Mammary epithelial cell (primary cell): ENCODE measurements at regions of chr9 and their contacts with region 1.

Region 1: DNA sequence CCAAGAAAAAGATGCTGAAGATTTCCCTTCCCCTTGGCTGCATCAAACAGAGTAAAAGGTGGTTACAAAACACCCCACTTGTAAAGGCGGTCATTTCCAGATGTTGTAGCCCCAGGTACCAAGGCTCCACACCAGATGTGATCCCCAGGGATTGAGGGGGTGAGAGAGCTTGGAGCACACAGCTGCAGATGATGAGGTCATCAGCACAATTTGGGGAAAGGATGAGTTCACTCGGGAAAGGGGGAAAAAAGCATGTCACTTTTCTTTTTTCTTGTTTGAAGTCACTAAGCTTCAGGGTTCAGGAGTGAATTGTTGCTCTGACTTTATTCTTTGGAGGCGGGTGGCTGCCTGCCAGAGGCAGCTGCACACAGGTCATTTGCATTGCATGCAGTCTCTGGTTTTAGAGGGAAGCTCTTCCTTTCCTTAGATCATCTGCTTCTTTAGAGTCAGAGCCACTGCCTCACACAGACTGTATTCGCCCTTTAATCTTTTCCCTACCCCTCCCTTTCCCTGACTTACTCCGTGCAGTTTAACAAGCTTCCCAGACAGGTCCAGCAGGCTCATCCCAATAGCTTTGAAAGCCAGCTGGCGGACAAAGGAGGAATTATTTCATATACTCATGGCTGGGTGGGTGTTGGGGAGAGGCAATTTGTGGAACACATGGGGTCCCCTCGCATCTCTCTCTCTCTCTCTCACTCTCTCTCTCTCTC is 409.3 kb upstream of the SLC24A2 start:
- DNase-seq: peak; percentile 43
- H3K4me3 ChIP-seq: no peak overlapping the region
- H3K27ac ChIP-seq: no peak overlapping the region
- H3K4me1 ChIP-seq: no peaks in the 10 kb centered on the region
- H3K27me3 ChIP-seq: no peaks in the 10 kb centered on the region
- CTCF ChIP-seq: peak in 1 of 2 donors; percentile 13

Region 2: GRCh38 chr9:20271096-20271495 is 73.0 kb after region 1 on chr9:
- CTCF ChIA-PET with region 1: no interaction called
- dilution Hi-C with region 1: no loop called
- in situ Hi-C with region 1: no loop called
- intact Hi-C with region 1: loop called (anchors 2 kb)
- DNase-seq: no peak
- H3K4me3 ChIP-seq: no peak overlapping the region
- H3K27ac ChIP-seq: no peak overlapping the region
- H3K4me1 ChIP-seq: peaks cover 11% of the 10 kb centered on the region
- H3K27me3 ChIP-seq: no peaks in the 10 kb centered on the region
- CTCF ChIP-seq: no peak

Region 3: DNA sequence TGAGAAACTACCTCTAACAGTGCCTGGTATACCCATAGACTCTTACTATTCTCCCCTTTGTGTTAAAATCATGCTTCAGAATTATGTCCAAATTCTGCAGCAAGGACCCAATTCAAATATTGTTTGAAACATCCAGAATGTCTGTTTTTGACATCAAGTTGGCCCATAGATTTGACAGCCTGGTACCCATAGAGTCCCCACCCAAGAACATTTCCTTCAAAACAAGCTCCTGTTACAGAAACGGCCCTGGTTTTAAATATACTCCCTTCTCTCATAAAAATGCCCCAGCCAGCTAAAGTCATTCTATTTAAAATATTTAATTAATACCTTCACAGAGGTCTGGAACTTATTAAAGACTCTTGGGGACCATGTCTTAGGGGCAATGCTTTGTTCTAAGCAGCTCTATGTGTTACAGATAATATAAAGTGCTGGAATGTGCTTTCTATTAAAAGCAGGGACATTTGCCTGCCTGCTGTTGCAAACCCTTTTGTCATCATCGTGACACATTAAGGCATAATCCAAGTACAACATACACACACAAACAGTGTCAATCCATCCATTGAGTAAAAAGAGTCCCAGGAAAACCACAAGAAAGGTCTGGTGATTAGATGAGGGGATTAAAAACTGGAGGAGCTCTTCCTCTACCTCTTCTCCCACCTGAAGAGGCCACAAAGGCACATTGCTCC is 102.4 kb after region 1 on chr9:
- CTCF ChIA-PET with region 1: no interaction called
- dilution Hi-C with region 1: no loop called
- in situ Hi-C with region 1: no loop called
- intact Hi-C with region 1: no loop called
- DNase-seq: no peak
- H3K4me3 ChIP-seq: no peak overlapping the region
- H3K27ac ChIP-seq: no peak overlapping the region
- H3K4me1 ChIP-seq: peaks cover 11% of the 10 kb centered on the region
- H3K27me3 ChIP-seq: no peaks in the 10 kb centered on the region
- CTCF ChIP-seq: no peak

Region 4: DNA sequence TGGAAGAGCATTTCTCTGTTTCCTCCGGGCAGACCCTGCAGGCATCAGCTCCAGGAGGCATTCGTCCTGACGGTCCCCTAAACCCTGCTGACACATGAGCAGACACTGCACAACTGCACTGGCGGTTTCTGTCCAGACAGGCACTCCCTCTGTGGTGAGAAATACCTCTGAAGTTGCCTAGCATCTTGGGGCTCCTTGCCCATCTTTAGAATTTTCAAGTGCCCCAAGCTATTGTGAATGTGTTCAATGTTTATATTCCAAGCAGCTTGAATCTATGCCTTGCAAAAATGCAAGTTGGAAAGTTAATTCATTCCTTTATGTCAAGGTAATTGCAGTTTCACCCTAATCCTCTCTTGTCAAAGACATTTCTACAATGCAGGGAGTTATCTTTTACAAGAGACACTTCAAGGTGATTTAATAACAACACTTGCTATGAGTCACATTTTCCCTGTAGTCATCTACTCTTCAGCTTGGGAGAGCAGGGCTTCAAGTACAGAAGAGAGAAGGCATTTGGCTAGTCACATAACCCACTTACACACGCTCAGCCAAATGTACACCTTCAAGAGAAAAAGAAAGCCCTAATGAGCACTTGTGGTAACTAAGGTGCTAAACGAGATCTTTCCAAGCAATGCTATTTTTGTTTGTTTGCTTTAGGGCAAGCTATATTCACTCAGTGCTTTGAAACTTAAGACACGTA is 121.7 kb after region 1 on chr9:
- CTCF ChIA-PET with region 1: no interaction called
- dilution Hi-C with region 1: no loop called
- in situ Hi-C with region 1: no loop called
- intact Hi-C with region 1: loop called (anchors 10 kb)
- DNase-seq: peak; percentile 85
- H3K4me3 ChIP-seq: no peak overlapping the region
- H3K27ac ChIP-seq: peak overlapping the region; percentile 74
- H3K4me1 ChIP-seq: peaks cover 42% of the 10 kb centered on the region
- H3K27me3 ChIP-seq: no peaks in the 10 kb centered on the region
- CTCF ChIP-seq: no peak

Region 5: DNA sequence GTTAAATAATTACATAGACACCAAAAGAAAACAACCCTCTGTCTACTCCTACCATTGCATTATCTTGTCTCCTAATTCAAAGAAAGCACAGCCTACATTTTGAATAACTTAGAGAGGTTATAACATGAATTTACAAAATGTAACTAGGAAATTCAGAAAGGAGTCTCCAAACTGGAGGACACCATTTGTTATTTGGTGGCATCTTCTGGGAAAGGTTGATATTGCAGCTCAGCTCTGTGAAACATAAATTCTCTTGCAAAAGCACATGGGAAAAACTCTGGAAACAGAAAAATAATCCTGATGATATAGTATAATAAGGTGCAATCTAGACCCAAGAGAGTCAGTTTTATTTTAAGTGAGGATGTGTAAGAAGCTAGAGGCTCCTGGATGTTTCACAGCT is 208.9 kb after region 1 on chr9:
- CTCF ChIA-PET with region 1: no interaction called
- dilution Hi-C with region 1: no loop called
- in situ Hi-C with region 1: no loop called
- intact Hi-C with region 1: loop called (anchors 10 kb)
- DNase-seq: no peak
- H3K4me3 ChIP-seq: no peak overlapping the region
- H3K27ac ChIP-seq: no peak overlapping the region
- H3K4me1 ChIP-seq: no peaks in the 10 kb centered on the region
- H3K27me3 ChIP-seq: no peaks in the 10 kb centered on the region
- CTCF ChIP-seq: peak; percentile 8 to 34

Region 6: DNA sequence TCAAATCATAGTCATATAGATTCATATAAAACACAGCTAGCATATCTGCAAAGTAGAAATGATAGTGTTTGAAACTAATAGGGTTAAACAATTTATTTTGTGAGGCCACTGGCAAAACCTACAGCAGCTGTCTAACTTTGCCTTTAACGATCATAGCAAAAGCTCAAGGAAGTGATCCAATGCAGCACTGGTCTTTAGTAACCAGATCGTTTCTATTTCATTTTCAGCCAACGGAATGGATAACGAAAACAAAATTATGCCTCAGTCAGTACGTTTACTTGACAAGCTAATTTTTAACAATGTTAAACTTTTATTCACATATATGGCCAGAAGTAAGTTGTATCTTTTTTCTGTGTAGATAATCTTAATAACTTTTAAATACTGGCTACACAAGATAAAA is 406.4 kb after region 1 on chr9:
- CTCF ChIA-PET with region 1: no interaction called
- dilution Hi-C with region 1: no loop called
- in situ Hi-C with region 1: no loop called
- intact Hi-C with region 1: no loop called
- DNase-seq: no peak
- H3K4me3 ChIP-seq: no peak overlapping the region
- H3K27ac ChIP-seq: no peak overlapping the region
- H3K4me1 ChIP-seq: no peaks in the 10 kb centered on the region
- H3K27me3 ChIP-seq: no peaks in the 10 kb centered on the region
- CTCF ChIP-seq: no peak